Activated CD4-positive, alpha-beta T cell treated with anti-CD3 and anti-CD28 coated beads for 36 hours (primary cell): ENCODE measurements at regions of chr2 and their contacts with region 1.

Region 1: DNA sequence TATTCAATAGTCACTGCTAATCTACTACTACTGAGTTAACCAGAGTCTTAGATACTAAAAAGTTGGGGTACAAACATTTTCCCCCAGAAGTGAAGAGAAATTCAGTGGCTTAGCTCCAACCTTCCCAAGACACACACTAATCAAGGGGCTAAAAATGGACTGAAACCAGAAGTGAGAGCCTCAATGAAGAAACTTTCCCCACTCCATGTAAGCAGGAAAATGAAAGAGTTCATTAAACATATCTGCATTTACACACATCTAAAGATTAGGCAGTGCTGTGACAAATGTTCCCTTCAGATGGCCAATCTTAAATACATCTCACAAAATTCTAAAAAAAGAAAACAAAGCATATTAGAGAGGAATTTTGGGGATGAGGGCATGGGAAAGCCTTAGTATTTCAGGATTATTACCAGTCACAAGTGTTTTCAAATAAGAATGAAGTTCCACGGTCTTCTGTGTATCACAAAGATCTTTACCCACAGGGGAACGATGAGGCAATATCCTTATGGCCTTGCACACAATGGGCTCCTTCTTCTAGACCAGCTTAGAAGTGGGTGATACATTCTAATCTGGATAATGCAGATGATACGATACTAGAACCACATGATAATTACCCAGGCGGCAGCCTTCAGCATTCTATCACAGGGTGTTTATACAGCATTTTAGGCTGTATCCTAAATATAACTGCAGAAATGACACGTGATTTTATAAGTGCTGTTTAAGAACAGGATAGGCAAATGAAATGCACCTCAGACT is 17.1 kb downstream of the ANKRD44 start:
- DNase-seq: peak; percentile 51
- ATAC-seq: peak; percentile 59
- H3K4me3 Mint-ChIP-seq: peak overlapping the region; percentile 67
- H3K27ac Mint-ChIP-seq: peak overlapping the region; percentile 93
- H3K4me1 Mint-ChIP-seq: peaks cover 92% of the 10 kb centered on the region
- H3K27me3 Mint-ChIP-seq: no peaks in the 10 kb centered on the region

Region 2: GRCh38 chr2:196239622-196240587 is 1053.5 kb before region 1 on chr2:
- CTCF ChIA-PET with region 1: no interaction called
- POLR2A ChIA-PET with region 1: no interaction called
- intact Hi-C with region 1: loop called in 1 of 2 experiments (anchors 5 kb)
- DNase-seq: peak; percentile 91
- ATAC-seq: peak; percentile 58
- H3K4me3 Mint-ChIP-seq: peak overlapping the region; percentile 46
- H3K27ac Mint-ChIP-seq: peak overlapping the region; percentile 97
- H3K4me1 Mint-ChIP-seq: peaks cover 91% of the 10 kb centered on the region
- H3K27me3 Mint-ChIP-seq: no peaks in the 10 kb centered on the region

Region 3: DNA sequence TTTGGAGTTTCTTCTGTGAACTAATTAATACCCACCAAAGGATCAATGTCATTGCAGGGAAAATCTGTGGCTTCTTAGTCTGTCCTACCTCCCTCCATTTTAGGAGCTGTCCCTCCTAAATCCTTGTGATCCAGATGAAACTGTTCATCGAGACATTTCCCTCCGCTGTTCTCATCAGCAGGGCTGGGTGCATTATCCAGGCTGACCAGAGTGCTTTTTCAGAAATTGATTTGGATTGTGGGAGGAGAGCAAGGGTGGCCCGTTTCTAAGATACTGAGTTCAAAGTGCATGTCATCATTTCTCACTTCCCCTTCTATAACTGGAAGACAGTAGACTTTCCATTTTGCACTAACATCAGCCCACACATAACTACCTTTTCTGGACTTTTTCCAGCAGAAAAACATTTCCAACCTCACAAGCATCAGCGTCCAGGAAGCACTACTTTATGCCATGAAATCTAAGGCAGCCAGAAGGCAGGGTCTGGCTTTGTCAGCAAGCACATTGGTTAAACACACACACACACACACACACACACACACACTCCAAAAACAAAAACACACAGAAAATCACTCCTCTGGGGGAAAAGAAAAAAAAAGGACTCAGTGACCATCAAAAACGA is 77.0 kb before region 1 on chr2:
- CTCF ChIA-PET with region 1: interaction called, 3 read pairs
- POLR2A ChIA-PET with region 1: no interaction called
- intact Hi-C with region 1: loop called (anchors 2 kb)
- DNase-seq: no peak
- ATAC-seq: peak; percentile 54
- H3K4me3 Mint-ChIP-seq: peak overlapping the region; percentile 70
- H3K27ac Mint-ChIP-seq: peak overlapping the region; percentile 99
- H3K4me1 Mint-ChIP-seq: peaks cover 88% of the 10 kb centered on the region
- H3K27me3 Mint-ChIP-seq: no peaks in the 10 kb centered on the region

Region 4: DNA sequence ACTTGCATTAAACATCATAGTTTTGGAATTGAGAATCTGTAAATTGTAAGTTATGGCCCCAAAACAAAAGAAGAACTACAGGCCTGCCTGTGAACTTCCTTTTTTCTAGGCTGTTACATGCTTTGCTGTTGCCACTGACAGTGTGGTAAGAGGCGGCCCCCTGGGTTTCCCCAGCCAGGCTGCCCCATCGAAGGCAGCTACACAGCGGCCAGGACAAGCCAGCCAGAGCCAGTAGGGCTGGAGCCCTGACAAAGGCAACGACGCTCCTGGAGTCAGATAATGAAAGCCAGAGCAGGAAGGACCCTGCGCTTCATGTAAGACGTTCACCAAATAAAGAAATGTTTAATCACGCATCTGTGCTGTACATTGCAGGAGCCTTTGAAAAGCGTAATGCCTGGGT is 37.9 kb before region 1 on chr2:
- CTCF ChIA-PET with region 1: interaction called, 5 read pairs
- POLR2A ChIA-PET with region 1: no interaction called
- intact Hi-C with region 1: loop called in 1 of 2 experiments (anchors 2 kb)
- DNase-seq: peak; percentile 90
- ATAC-seq: peak; percentile 89
- H3K4me3 Mint-ChIP-seq: peak overlapping the region; percentile 75
- H3K27ac Mint-ChIP-seq: peak overlapping the region; percentile 96
- H3K4me1 Mint-ChIP-seq: peaks cover 80% of the 10 kb centered on the region
- H3K27me3 Mint-ChIP-seq: no peaks in the 10 kb centered on the region

Region 5: GRCh38 chr2:197304556-197305011 is 11.2 kb after region 1 on chr2:
- CTCF ChIA-PET with region 1: interaction called, 7 read pairs
- POLR2A ChIA-PET with region 1: interaction called, 4 read pairs
- intact Hi-C with region 1: loop called (anchors 1 kb)
- DNase-seq: peak; percentile 56
- ATAC-seq: peak; percentile 70
- H3K4me3 Mint-ChIP-seq: peak overlapping the region; percentile 93
- H3K27ac Mint-ChIP-seq: peak overlapping the region; percentile 98
- H3K4me1 Mint-ChIP-seq: peaks cover 80% of the 10 kb centered on the region
- H3K27me3 Mint-ChIP-seq: no peaks in the 10 kb centered on the region

Region 6: DNA sequence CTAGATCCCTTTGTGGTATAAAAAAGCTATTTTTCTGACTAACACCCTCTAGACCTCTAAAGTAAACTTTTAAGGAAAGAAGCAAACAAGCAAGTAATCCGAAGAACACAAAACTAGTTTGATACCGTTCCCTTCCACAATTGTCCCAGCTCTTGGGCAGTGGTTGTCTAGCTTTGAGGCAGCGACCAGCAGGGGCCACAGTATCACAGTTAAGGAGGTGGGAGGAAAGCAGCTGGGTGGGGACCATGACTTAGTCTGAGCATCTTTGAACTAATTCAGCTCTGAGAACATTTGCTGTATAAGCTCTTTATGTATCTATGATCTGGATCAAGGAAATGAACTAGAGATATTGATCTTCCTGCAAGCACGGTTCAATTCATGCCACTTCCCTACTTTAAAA is 90.4 kb after region 1 on chr2:
- CTCF ChIA-PET with region 1: no interaction called
- POLR2A ChIA-PET with region 1: no interaction called
- intact Hi-C with region 1: no loop called
- DNase-seq: no peak
- ATAC-seq: no peak
- H3K4me3 Mint-ChIP-seq: no peak overlapping the region
- H3K27ac Mint-ChIP-seq: no peak overlapping the region
- H3K4me1 Mint-ChIP-seq: peaks cover 8% of the 10 kb centered on the region
- H3K27me3 Mint-ChIP-seq: no peaks in the 10 kb centered on the region